CD4-positive, alpha-beta memory T cell (primary cell): ENCODE measurements at regions of chr10 and their contacts with region 1.

Region 1: GRCh38 chr10:102225646-102226541 is at the start of gene ELOVL3:
- DNase-seq: peak; percentile 81 to 90 (median 84)
- H3K4me3 ChIP-seq: peak within 1 kb of the TSS in 1 of 2 donors; percentile 31
- H3K4me3 Mint-ChIP-seq: peak within 1 kb of the TSS; percentile 67 to 86 (median 80)
- H3K27ac ChIP-seq: peak within 1 kb of the TSS; percentile 7
- H3K27ac Mint-ChIP-seq: peak within 1 kb of the TSS; percentile 31 to 89 (median 52)
- H3K4me1 ChIP-seq: peaks cover 18% of the 10 kb centered on the region
- H3K4me1 Mint-ChIP-seq: peaks cover 6 to 26% (median 15%) of the 10 kb centered on the region in 4 donors
- H3K27me3 ChIP-seq: peaks cover 9% of the 10 kb centered on the region
- H3K27me3 Mint-ChIP-seq: peaks cover 22 to 27% of the 10 kb centered on the region in 2 donors
- total RNA-seq, gene ELOVL3: not detected

Region 2: DNA sequence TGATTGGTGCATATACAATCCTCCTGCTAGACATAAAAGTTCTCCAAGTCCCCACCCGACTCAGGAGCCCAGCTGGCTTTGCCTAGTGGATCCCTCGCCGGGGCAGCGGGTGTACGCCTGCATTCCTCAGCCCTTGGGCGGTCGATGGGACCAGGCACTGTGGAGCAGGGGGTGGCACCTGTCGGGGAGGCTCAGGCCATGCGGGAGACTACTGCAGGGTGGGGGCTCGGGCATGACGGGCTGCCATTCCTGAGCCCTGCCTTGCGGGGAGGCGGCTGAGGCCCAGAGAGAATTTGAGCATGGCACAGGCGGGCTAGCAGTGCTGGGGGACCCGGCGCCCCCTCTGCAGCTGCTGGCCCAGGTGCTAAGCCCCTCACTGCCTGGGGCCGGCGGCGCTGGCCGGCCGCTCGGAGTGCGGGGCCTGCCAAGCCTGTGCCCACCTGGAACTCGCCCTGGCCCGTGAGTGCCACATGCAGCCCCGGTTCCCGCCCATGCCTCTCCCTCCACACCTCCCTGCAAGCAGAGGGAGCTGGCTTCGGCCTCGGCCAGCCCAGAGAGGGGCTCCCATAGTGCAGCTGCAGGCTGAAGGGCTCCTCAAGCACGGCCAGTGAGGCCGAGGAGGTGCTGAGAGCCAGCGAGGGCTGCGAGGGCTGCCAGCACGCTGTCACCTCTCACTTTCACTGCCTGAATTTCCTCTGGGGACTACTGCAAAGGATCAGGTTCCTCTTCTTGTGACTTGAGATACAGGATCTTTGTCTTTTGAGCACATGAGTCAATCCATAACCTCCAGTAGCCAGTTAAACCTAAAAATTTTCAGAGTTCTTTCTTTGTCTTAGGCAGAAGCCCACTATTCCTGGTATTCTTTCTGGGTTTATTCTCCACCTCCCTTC is 24.9 kb before region 1 on chr10:
- CTCF ChIA-PET with region 1: no interaction called
- POLR2A ChIA-PET with region 1: no interaction called
- intact Hi-C with region 1: no loop called
- DNase-seq: no peak
- H3K4me3 ChIP-seq: no peak overlapping the region
- H3K4me3 Mint-ChIP-seq: no peak overlapping the region
- H3K27ac ChIP-seq: no peak overlapping the region
- H3K27ac Mint-ChIP-seq: no peak overlapping the region
- H3K4me1 ChIP-seq: no peaks in the 10 kb centered on the region
- H3K4me1 Mint-ChIP-seq: no peaks in the 10 kb centered on the region
- H3K27me3 ChIP-seq: no peaks in the 10 kb centered on the region
- H3K27me3 Mint-ChIP-seq: peaks cover 0 to 7% of the 10 kb centered on the region in 2 donors

Region 3: GRCh38 chr10:102245101-102245931 is 19.4 kb after region 1 on chr10 and contains the start of gene GBF1:
- CTCF ChIA-PET with region 1: interaction called, 46 read pairs
- POLR2A ChIA-PET with region 1: interaction called, 22 read pairs
- intact Hi-C with region 1: loop called (anchors 1 kb)
- DNase-seq: peak; percentile 95 to 98 (median 96)
- H3K4me3 ChIP-seq: peak within 1 kb of the TSS; percentile 51 to 94
- H3K4me3 Mint-ChIP-seq: peak within 1 kb of the TSS; percentile 84 to 99 (median 98)
- H3K27ac ChIP-seq: peak within 1 kb of the TSS; percentile 96
- H3K27ac Mint-ChIP-seq: peak within 1 kb of the TSS; percentile 89 to 98 (median 97)
- H3K4me1 ChIP-seq: peaks cover 64% of the 10 kb centered on the region
- H3K4me1 Mint-ChIP-seq: peaks cover 38 to 66% (median 50%) of the 10 kb centered on the region in 4 donors
- H3K27me3 ChIP-seq: peaks cover 6% of the 10 kb centered on the region
- H3K27me3 Mint-ChIP-seq: peaks cover 3 to 16% of the 10 kb centered on the region in 2 donors
- total RNA-seq, gene GBF1: 39.6 to 44.7 TPM

Region 4: GRCh38 chr10:102274062-102274461 is 48.2 kb after region 1 on chr10:
- CTCF ChIA-PET with region 1: interaction called, 20 read pairs
- POLR2A ChIA-PET with region 1: no interaction called
- intact Hi-C with region 1: no loop called
- DNase-seq: no peak
- H3K4me3 ChIP-seq: no peak overlapping the region
- H3K4me3 Mint-ChIP-seq: no peak overlapping the region
- H3K27ac ChIP-seq: no peak overlapping the region
- H3K27ac Mint-ChIP-seq: peak overlapping the region in 3 of 7 donors; percentile 17 to 52 (median 31)
- H3K4me1 ChIP-seq: peaks cover 14% of the 10 kb centered on the region
- H3K4me1 Mint-ChIP-seq: peaks cover 21 to 40% (median 32%) of the 10 kb centered on the region in 4 donors
- H3K27me3 ChIP-seq: no peaks in the 10 kb centered on the region
- H3K27me3 Mint-ChIP-seq: no peaks in the 10 kb centered on the region

Region 5: DNA sequence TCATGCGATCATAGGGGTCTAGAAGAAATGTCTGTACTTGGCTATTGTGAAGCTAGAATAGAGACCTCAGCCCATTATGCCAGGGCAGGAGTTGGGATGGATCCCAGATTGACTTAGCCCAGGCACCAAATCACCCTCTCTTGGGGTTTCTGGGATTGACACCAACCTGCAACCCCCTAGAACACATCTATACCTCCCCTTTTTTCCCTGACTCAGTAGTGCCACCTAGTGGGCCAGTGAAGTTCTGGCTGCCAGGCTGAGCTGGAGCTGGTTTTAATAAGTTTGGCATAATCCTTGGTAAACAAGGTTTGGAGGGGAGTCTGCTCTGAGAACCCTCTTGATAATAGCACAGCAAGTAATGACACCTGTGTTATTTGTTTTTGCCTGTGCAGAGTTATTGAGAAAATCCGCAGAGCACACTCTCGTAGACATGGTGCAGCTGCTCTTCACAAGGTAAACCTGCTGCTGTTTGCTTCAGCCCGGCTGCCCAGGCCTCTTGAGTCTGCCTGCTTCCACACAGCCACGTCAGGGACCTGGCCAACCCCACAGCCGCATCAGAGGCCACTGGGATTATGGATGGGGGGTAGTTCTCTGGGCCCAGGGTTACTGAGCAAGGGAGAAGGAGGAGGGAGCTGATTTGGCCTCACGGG is 126.3 kb after region 1 on chr10:
- CTCF ChIA-PET with region 1: interaction called, 549 read pairs
- POLR2A ChIA-PET with region 1: interaction called, 30 read pairs
- intact Hi-C with region 1: loop called (anchors 1 kb)
- DNase-seq: peak; percentile 60 to 71 (median 67)
- H3K4me3 ChIP-seq: no peak overlapping the region
- H3K4me3 Mint-ChIP-seq: no peak overlapping the region
- H3K27ac ChIP-seq: no peak overlapping the region
- H3K27ac Mint-ChIP-seq: peak overlapping the region in 1 of 7 donors; percentile 25
- H3K4me1 ChIP-seq: no peaks in the 10 kb centered on the region
- H3K4me1 Mint-ChIP-seq: peaks cover 0 to 4% (median 1%) of the 10 kb centered on the region in 4 donors
- H3K27me3 ChIP-seq: no peaks in the 10 kb centered on the region
- H3K27me3 Mint-ChIP-seq: no peaks in the 10 kb centered on the region

Region 6: GRCh38 chr10:102399217-102400089 is 173.6 kb after region 1 on chr10:
- CTCF ChIA-PET with region 1: interaction called, 88 read pairs
- POLR2A ChIA-PET with region 1: interaction called, 23 read pairs
- intact Hi-C with region 1: loop called (anchors 1 kb)
- DNase-seq: peak; percentile 86 to 90 (median 87)
- H3K4me3 ChIP-seq: peak overlapping the region in 1 of 2 donors; percentile 49
- H3K4me3 Mint-ChIP-seq: peak overlapping the region; percentile 53 to 81 (median 74)
- H3K27ac ChIP-seq: peak overlapping the region; percentile 100
- H3K27ac Mint-ChIP-seq: peak overlapping the region; percentile 89 to 100 (median 100)
- H3K4me1 ChIP-seq: peaks cover 44% of the 10 kb centered on the region
- H3K4me1 Mint-ChIP-seq: peaks cover 19 to 68% (median 32%) of the 10 kb centered on the region in 4 donors
- H3K27me3 ChIP-seq: no peaks in the 10 kb centered on the region
- H3K27me3 Mint-ChIP-seq: no peaks in the 10 kb centered on the region

Region 7: DNA sequence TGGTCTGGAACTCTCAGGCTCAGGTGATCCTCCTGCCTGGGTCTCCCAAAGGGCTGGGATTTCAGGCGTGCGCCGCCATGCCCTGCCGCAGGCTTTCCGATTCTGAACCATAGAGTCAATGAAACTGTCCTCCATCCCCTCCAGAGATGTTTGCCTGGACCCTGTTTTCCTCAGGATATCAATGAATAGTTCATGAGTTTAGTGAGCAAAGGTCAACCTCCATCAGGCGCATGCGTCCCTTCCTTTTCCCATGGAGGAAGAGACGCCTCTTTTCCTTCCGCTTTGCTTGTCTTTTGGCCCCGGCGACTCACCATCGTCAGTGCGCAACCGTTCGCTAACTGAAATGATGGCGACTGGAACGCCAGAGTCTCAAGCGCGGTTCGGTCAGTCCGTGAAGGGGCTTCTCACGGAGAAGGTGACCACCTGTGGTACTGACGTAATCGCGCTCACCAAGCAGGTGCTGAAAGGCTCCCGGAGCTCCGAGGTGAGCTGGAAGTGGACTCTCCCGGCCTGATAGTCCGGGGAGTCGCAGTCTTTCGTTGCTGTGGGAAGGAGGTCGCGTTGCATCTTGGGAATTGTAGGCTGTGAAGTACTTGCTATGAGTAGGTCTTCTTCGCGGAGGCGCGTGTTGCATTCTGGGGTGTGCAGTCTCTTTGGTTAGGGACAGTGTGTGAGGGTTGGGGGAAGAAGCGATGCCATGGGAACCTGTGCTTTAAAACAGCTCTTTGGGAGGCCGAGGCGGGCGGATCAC is 628.2 kb after region 1 on chr10 and contains the start of gene BORCS7:
- CTCF ChIA-PET with region 1: no interaction called
- POLR2A ChIA-PET with region 1: no interaction called
- intact Hi-C with region 1: no loop called
- DNase-seq: peak; percentile 87 to 93 (median 89)
- H3K4me3 ChIP-seq: peak within 1 kb of the TSS; percentile 63 to 91
- H3K4me3 Mint-ChIP-seq: peak within 1 kb of the TSS; percentile 77 to 99 (median 94)
- H3K27ac ChIP-seq: peak within 1 kb of the TSS; percentile 89
- H3K27ac Mint-ChIP-seq: peak within 1 kb of the TSS; percentile 92 to 100 (median 99)
- H3K4me1 ChIP-seq: peaks cover 4% of the 10 kb centered on the region
- H3K4me1 Mint-ChIP-seq: peaks cover 8 to 24% (median 14%) of the 10 kb centered on the region in 4 donors
- H3K27me3 ChIP-seq: no peaks in the 10 kb centered on the region
- H3K27me3 Mint-ChIP-seq: no peaks in the 10 kb centered on the region
- total RNA-seq, gene BORCS7: 14.7 to 17.7 TPM